Natural killer cell (primary cell): ENCODE measurements at regions of chr15 and their contacts with region 1.

Region 1: DNA sequence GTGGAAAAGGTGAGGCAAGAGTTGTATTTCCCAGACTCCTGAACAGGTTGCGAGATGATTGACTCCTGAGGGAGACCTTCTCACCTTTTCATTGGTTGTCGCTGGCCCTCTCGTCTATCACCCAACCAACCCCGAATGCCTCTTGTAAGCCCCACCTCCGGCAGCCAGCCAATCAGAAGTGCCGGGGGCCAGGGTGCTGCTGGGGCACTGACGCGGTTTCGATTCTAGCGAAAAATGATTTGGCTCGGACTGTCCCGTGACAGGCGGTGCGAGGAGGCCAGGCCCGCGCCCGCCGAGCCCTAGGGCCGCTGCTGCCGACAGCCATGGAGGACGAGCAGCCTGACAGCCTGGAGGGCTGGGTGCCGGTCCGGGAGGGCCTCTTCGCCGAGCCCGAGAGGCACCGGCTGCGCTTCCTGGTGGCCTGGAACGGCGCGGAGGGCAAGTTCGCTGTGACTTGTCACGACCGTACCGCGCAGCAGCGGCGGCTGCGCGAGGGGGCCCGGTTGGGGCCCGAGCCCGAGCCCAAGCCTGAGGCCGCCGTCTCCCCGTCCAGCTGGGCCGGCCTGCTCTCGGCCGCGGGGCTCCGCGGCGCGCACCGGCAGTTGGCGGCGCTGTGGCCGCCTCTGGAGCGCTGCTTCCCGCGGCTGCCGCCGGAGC is at the start of gene WHAMM:
- DNase-seq: peak; percentile 95 to 97
- ATAC-seq: peak; percentile 88 to 97 (median 92)
- H3K4me3 ChIP-seq: peak within 1 kb of the TSS; percentile 66
- H3K4me3 Mint-ChIP-seq: peak within 1 kb of the TSS; percentile 100
- H3K27ac ChIP-seq: peak within 1 kb of the TSS; percentile 95
- H3K27ac Mint-ChIP-seq: peak within 1 kb of the TSS; percentile 93 to 99
- H3K4me1 ChIP-seq: peaks cover 20% of the 10 kb centered on the region
- H3K4me1 Mint-ChIP-seq: peaks cover 44% of the 10 kb centered on the region in 2 donors
- H3K27me3 ChIP-seq: no peaks in the 10 kb centered on the region
- H3K27me3 Mint-ChIP-seq: no peaks in the 10 kb centered on the region
- CTCF ChIP-seq: no peak
- total RNA-seq, gene WHAMM: 48.5 to 78.0 (median 67.6) TPM

Region 2: GRCh38 chr15:82540055-82540983 is 269.2 kb before region 1 on chr15 and contains the start of gene RPS17:
- intact Hi-C with region 1: loop called (anchors 1 kb)
- DNase-seq: peak; percentile 98 to 99
- ATAC-seq: peak; percentile 94 to 100 (median 94)
- H3K4me3 ChIP-seq: peak within 1 kb of the TSS; percentile 83
- H3K4me3 Mint-ChIP-seq: peak within 1 kb of the TSS; percentile 96
- H3K27ac ChIP-seq: peak within 1 kb of the TSS; percentile 87
- H3K27ac Mint-ChIP-seq: peak within 1 kb of the TSS; percentile 92 to 95
- H3K4me1 ChIP-seq: peaks cover 23% of the 10 kb centered on the region
- H3K4me1 Mint-ChIP-seq: peaks cover 35 to 44% of the 10 kb centered on the region in 2 donors
- H3K27me3 ChIP-seq: no peaks in the 10 kb centered on the region
- H3K27me3 Mint-ChIP-seq: peaks cover 0 to 4% of the 10 kb centered on the region in 2 donors
- CTCF ChIP-seq: peak; percentile 97
- total RNA-seq, gene RPS17: 1,035 to 1,314 (median 1,130) TPM

Region 3: DNA sequence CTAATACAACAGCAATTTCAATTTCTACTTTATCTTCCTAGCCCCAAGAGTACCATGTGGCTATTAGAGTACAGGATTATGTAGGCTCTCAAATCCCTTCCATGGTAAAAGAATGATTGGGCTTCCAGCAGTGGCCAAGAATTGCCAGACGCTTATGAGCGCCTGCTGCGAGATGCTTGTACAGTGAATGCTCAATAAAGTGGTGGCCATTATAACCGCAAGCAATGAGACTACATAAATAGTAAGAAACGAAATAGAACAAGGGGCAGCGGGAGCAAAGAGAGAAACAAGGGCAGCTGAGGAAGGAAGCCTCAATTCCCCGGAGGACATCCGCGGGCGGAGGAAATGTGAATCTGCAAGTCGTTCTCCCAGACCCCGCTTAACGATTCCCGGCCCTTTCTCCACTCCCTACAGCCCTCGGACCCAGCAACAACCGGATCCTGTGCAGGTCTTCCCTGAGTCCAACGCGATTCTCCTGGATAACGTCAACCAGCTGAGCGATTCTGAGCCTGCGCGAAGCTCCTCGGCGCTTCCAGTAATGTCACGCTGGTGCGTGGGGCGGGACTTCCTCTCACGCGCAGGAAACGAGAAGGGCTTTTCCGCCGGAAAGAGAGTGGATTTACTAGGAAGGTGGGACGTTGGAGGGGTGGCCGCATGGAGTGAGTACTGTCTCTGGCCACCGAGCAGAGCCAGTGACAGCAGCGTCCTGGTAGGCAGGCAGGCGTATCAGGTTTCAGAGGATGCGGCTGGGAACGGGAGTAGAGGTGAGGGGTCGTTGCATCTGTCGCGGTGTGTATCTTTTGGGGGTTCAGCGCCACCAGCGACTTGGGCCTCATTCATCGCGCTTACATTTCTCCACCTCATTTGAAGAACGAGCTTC is 59.3 kb before region 1 on chr15:
- intact Hi-C with region 1: loop called (anchors 1 kb)
- DNase-seq: peak; percentile 71 to 91
- ATAC-seq: peak; percentile 94 to 97 (median 97)
- H3K4me3 ChIP-seq: peak overlapping the region; percentile 73
- H3K4me3 Mint-ChIP-seq: peak overlapping the region; percentile 99
- H3K27ac ChIP-seq: peak overlapping the region; percentile 71
- H3K27ac Mint-ChIP-seq: peak overlapping the region; percentile 91 to 94
- H3K4me1 ChIP-seq: peaks cover 20% of the 10 kb centered on the region
- H3K4me1 Mint-ChIP-seq: peaks cover 34 to 38% of the 10 kb centered on the region in 2 donors
- H3K27me3 ChIP-seq: no peaks in the 10 kb centered on the region
- H3K27me3 Mint-ChIP-seq: no peaks in the 10 kb centered on the region
- CTCF ChIP-seq: no peak

Region 4: DNA sequence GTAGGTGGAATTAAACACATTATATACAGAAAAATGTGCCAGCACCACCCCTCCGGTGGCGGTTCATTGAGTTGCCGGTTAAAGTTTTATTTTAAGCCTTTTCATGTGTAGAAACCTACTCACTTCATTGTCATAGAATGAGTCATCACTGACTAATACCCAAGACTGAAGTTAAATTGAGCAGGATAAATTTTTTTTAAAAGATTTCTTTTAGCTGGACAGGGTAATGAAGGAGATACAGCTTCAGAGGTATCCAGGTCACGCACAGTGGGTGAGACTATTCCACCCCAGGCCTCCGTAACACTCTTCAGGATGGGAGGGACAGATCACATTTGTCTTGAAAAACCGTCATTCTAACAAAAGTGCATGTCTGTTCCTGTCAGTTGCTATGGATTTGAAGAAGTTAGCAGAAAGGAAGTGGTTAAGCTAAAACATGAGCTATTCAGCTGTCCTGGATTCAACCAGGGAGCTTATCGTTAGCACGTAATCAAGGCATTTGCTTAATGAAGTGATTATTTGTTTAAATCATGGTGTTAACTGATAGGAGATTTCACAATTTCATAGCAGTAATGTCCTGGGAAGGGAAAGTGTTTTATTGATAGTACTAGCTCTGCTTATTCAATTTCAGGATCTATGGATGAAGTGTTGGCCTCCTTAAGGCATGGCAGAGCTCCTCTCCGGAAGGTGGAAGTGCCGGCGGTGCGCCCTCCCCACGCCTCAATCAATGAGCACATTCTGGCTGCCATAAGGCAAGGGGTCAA is 23.2 kb after region 1 on chr15:
- intact Hi-C with region 1: loop called (anchors 2 kb)
- DNase-seq: no peak
- ATAC-seq: peak in 2 of 3 donors; percentile 3 to 56
- H3K4me3 ChIP-seq: no peak overlapping the region
- H3K4me3 Mint-ChIP-seq: no peak overlapping the region
- H3K27ac ChIP-seq: no peak overlapping the region
- H3K27ac Mint-ChIP-seq: peak overlapping the region; percentile 78 to 81
- H3K4me1 ChIP-seq: no peaks in the 10 kb centered on the region
- H3K4me1 Mint-ChIP-seq: peaks cover 38 to 39% of the 10 kb centered on the region in 2 donors
- H3K27me3 ChIP-seq: no peaks in the 10 kb centered on the region
- H3K27me3 Mint-ChIP-seq: no peaks in the 10 kb centered on the region
- CTCF ChIP-seq: no peak

Region 5: GRCh38 chr15:83011271-83012075 is 201.9 kb after region 1 on chr15 and contains the start of gene C15orf40:
- intact Hi-C with region 1: loop called (anchors 5 kb)
- DNase-seq: peak; percentile 82 to 94
- ATAC-seq: peak; percentile 86 to 96 (median 92)
- H3K4me3 ChIP-seq: peak within 1 kb of the TSS; percentile 89
- H3K4me3 Mint-ChIP-seq: peak within 1 kb of the TSS; percentile 93
- H3K27ac ChIP-seq: peak within 1 kb of the TSS; percentile 75
- H3K27ac Mint-ChIP-seq: peak within 1 kb of the TSS; percentile 85 to 90
- H3K4me1 ChIP-seq: peaks cover 23% of the 10 kb centered on the region
- H3K4me1 Mint-ChIP-seq: peaks cover 52% of the 10 kb centered on the region in 2 donors
- H3K27me3 ChIP-seq: no peaks in the 10 kb centered on the region
- H3K27me3 Mint-ChIP-seq: no peaks in the 10 kb centered on the region
- CTCF ChIP-seq: no peak
- total RNA-seq, gene C15orf40: 12.5 to 16.0 (median 15.1) TPM

Region 6: GRCh38 chr15:83066734-83067637 is 257.5 kb after region 1 on chr15 and contains the start of gene BTBD1:
- intact Hi-C with region 1: loop called (anchors 10 kb)
- DNase-seq: peak; percentile 74 to 86
- ATAC-seq: peak; percentile 82 to 92 (median 85)
- H3K4me3 ChIP-seq: peak within 1 kb of the TSS; percentile 57
- H3K4me3 Mint-ChIP-seq: peak within 1 kb of the TSS; percentile 83
- H3K27ac ChIP-seq: peak within 1 kb of the TSS; percentile 69
- H3K27ac Mint-ChIP-seq: peak within 1 kb of the TSS in 1 of 2 donors; percentile 68
- H3K4me1 ChIP-seq: peaks cover 11% of the 10 kb centered on the region
- H3K4me1 Mint-ChIP-seq: peaks cover 8 to 16% of the 10 kb centered on the region in 2 donors
- H3K27me3 ChIP-seq: no peaks in the 10 kb centered on the region
- H3K27me3 Mint-ChIP-seq: peaks cover under 1 to 1% of the 10 kb centered on the region in 2 donors
- CTCF ChIP-seq: no peak
- total RNA-seq, gene BTBD1: 42.5 to 54.4 (median 54.0) TPM